ENCODE measurements at regions of chr6 and their contacts with region 1.

Region 1: GRCh38 chr6:158808941-158809678 is 10.1 kb downstream of the EZR start:
- DNase-seq: peak; percentile 40
- ATAC-seq: peak; percentile 80
- H3K4me3 Mint-ChIP-seq: peak overlapping the region; percentile 67
- H3K27ac Mint-ChIP-seq: peak overlapping the region; percentile 94
- H3K4me1 Mint-ChIP-seq: peaks cover 98% of the 10 kb centered on the region
- H3K27me3 Mint-ChIP-seq: no peaks in the 10 kb centered on the region
- CTCF ChIP-seq: no peak

Region 2: GRCh38 chr6:158231551-158232315 is 577.4 kb before region 1 on chr6:
- CTCF ChIA-PET with region 1: no interaction called
- POLR2A ChIA-PET with region 1: no interaction called
- intact Hi-C with region 1: loop called (anchors 5 kb)
- DNase-seq: peak; percentile 79
- ATAC-seq: peak; percentile 76
- H3K4me3 Mint-ChIP-seq: peak overlapping the region; percentile 92
- H3K27ac Mint-ChIP-seq: peak overlapping the region; percentile 87
- H3K4me1 Mint-ChIP-seq: peaks cover 34% of the 10 kb centered on the region
- H3K27me3 Mint-ChIP-seq: no peaks in the 10 kb centered on the region
- CTCF ChIP-seq: no peak

Region 3: DNA sequence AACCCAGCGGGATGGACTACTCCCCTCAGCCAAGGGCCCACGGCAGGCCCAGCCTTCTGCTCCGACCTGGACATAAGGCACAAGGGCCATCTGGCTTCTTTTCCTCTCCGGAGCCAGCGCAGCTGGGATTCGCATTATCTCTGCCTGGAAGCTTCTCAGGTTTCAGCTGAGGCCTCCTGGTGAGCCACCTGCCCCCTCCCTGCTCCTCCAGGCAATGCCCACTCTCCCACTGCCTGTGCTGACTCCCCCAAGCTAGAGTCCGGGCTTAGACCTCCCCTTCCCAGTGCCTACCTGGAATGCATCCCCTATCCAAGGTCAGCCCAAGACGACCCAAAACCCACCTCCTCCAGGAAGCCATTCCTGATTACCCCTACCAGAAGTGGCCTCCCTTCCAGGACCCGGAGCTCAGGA is 50.7 kb before region 1 on chr6:
- CTCF ChIA-PET with region 1: no interaction called
- POLR2A ChIA-PET with region 1: no interaction called
- intact Hi-C with region 1: no loop called
- DNase-seq: no peak
- ATAC-seq: no peak
- H3K4me3 Mint-ChIP-seq: no peak overlapping the region
- H3K27ac Mint-ChIP-seq: no peak overlapping the region
- H3K4me1 Mint-ChIP-seq: no peaks in the 10 kb centered on the region
- H3K27me3 Mint-ChIP-seq: no peaks in the 10 kb centered on the region
- CTCF ChIP-seq: no peak

Region 4: DNA sequence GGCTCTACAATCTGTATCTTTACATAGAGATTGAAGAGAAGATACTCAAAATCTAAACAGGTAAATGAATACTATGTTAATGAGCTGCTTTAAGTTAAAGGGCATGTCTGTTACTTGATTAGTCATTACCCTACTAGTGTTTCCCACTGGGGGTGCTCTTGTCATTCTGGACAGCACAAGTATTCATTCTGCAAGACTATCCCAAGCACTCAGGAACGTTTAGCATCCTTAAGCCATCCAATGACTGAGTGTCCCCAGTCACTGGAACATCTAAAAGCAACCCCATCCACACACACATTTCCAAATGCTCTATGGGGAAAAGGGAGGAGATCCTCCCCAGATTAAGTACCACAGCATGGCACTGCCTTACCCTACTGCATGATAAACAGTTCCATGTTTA is 15.7 kb before region 1 on chr6:
- CTCF ChIA-PET with region 1: interaction called, 10 read pairs
- POLR2A ChIA-PET with region 1: interaction called, 139 read pairs
- intact Hi-C with region 1: no loop called
- DNase-seq: no peak
- ATAC-seq: peak; percentile 54
- H3K4me3 Mint-ChIP-seq: peak overlapping the region; percentile 44
- H3K27ac Mint-ChIP-seq: peak overlapping the region; percentile 70
- H3K4me1 Mint-ChIP-seq: peaks cover 95% of the 10 kb centered on the region
- H3K27me3 Mint-ChIP-seq: no peaks in the 10 kb centered on the region
- CTCF ChIP-seq: no peak

Region 5: GRCh38 chr6:158826801-158827573 is 17.9 kb after region 1 on chr6:
- CTCF ChIA-PET with region 1: no interaction called
- POLR2A ChIA-PET with region 1: interaction called, 19 read pairs
- intact Hi-C with region 1: no loop called
- DNase-seq: no peak
- ATAC-seq: peak; percentile 87
- H3K4me3 Mint-ChIP-seq: peak overlapping the region; percentile 52
- H3K27ac Mint-ChIP-seq: peak overlapping the region; percentile 93
- H3K4me1 Mint-ChIP-seq: peaks cover 39% of the 10 kb centered on the region
- H3K27me3 Mint-ChIP-seq: no peaks in the 10 kb centered on the region
- CTCF ChIP-seq: no peak

Region 6: DNA sequence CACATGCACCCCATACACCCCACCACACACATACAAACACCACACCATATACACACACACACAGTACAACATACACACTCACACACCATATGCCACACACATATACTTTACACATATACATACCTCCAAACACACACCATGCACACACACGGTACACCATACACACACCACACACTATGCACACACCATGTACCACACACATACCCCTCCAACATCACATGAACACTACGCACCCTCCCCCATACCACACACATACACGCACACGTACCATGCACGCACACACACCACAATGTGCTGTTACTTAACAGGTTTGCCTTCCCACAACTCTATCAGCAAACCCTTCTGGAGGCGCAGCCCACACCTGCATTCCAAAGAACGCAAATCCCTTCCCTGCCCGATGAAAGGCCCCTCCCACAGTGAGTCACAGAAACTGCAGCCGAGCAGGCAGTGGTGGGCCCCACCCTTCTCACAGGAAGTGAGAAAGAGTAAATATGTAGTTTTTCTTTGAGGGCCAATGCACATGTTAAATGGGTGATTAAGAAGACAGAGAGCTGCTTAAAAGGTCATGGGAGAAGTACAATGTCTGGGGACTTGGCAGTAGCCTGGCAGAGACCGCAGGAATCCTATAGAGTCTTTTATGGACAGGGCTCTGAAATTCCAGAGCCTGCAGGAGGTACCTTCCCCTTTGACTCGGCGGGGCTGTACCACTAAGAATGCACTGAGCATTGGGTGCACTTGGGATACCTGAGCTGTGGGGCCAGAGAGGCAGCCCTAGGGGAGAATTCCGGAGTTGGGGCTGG is 44.2 kb after region 1 on chr6:
- CTCF ChIA-PET with region 1: no interaction called
- POLR2A ChIA-PET with region 1: interaction called, 21 read pairs
- intact Hi-C with region 1: no loop called
- DNase-seq: peak; percentile 68
- ATAC-seq: peak; percentile 87
- H3K4me3 Mint-ChIP-seq: no peak overlapping the region
- H3K27ac Mint-ChIP-seq: no peak overlapping the region
- H3K4me1 Mint-ChIP-seq: peaks cover 26% of the 10 kb centered on the region
- H3K27me3 Mint-ChIP-seq: no peaks in the 10 kb centered on the region
- CTCF ChIP-seq: no peak

Region 7: GRCh38 chr6:158910484-158911348 is 101.6 kb after region 1 on chr6:
- CTCF ChIA-PET with region 1: interaction called, 4 read pairs
- POLR2A ChIA-PET with region 1: interaction called, 8 read pairs
- intact Hi-C with region 1: loop called (anchors 2 kb)
- DNase-seq: peak; percentile 36
- ATAC-seq: peak; percentile 76
- H3K4me3 Mint-ChIP-seq: peak overlapping the region; percentile 80
- H3K27ac Mint-ChIP-seq: peak overlapping the region; percentile 96
- H3K4me1 Mint-ChIP-seq: peaks cover 58% of the 10 kb centered on the region
- H3K27me3 Mint-ChIP-seq: no peaks in the 10 kb centered on the region
- CTCF ChIP-seq: no peak

Region 8: GRCh38 chr6:158958504-158959386 is 149.6 kb after region 1 on chr6:
- CTCF ChIA-PET with region 1: interaction called, 7 read pairs
- POLR2A ChIA-PET with region 1: interaction called, 6 read pairs
- intact Hi-C with region 1: loop called (anchors 2 kb)
- DNase-seq: peak; percentile 20
- ATAC-seq: peak; percentile 87
- H3K4me3 Mint-ChIP-seq: no peak overlapping the region
- H3K27ac Mint-ChIP-seq: no peak overlapping the region
- H3K4me1 Mint-ChIP-seq: peaks cover 34% of the 10 kb centered on the region
- H3K27me3 Mint-ChIP-seq: no peaks in the 10 kb centered on the region
- CTCF ChIP-seq: no peak

Region 9: DNA sequence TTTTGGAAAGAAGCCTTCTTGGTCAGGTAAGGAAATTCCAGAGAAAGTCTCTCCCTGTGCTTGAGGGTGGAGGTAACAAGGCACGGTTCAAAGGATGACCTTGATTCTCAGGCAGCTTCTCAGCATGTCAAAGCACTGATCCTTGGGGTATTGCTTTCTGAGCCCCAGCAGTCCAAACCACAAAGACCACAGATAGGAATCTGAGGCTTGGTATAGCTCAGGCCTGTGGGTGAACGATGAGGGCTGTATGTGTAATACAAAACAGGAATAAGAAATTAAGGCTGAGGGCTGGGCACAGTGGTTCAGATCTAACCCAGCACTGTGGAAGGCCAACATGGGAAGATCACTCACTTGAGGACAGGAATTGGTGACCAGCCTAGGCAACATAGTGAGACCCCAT is 1242.3 kb after region 1 on chr6:
- CTCF ChIA-PET with region 1: no interaction called
- POLR2A ChIA-PET with region 1: no interaction called
- intact Hi-C with region 1: no loop called
- DNase-seq: no peak
- ATAC-seq: no peak
- H3K4me3 Mint-ChIP-seq: no peak overlapping the region
- H3K27ac Mint-ChIP-seq: no peak overlapping the region
- H3K4me1 Mint-ChIP-seq: no peaks in the 10 kb centered on the region
- H3K27me3 Mint-ChIP-seq: no peaks in the 10 kb centered on the region
- CTCF ChIP-seq: no peak

Measured in activated B cell treated with CpG ODN at 0.5 μM for 24 hours (primary cell).